Caco-2 (cell line): ENCODE measurements at regions of chr1 and their contacts with region 1.

Region 1: DNA sequence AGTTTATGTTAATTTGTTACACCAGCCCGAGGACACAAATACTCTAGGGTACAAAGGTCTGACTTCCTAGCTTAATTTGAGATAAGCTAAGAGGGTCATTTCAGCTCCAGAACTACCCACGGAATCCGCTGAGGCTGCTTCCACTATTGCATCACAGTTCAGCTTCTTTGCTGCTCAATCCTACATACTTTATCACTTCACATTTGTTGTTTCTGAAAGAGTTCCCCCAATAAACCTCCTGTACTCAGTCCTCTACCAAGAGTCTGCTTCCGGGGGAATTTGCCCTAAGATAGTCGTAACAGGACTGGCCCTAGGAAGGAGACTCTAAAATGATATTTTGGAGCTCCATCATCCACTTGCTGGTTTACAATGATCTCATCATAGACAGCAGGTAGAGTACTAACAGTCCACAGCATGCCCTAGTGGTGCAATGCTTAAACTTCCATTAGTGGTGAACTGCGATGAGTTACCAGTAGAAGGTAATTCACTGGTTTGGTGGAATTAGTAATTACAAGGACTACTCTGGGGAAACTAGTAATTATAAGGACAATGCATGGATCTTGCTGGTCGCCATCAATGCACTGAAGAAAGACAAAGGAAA is 229.3 kb downstream of the USH2A start:
- DNase-seq: peak; percentile 22 to 32
- H3K4me3 ChIP-seq: no peak overlapping the region
- H3K4me3 Mint-ChIP-seq: peak overlapping the region; percentile 27
- H3K27ac Mint-ChIP-seq: no peak overlapping the region
- H3K4me1 ChIP-seq: peaks cover 11% of the 10 kb centered on the region; the same call in 1 of the 2 replicates
- H3K4me1 Mint-ChIP-seq: peaks cover 7% of the 10 kb centered on the region
- H3K27me3 ChIP-seq: no peaks in the 10 kb centered on the region
- H3K27me3 Mint-ChIP-seq: no peaks in the 10 kb centered on the region
- CTCF ChIP-seq: peak; percentile 40 to 41

Region 2: DNA sequence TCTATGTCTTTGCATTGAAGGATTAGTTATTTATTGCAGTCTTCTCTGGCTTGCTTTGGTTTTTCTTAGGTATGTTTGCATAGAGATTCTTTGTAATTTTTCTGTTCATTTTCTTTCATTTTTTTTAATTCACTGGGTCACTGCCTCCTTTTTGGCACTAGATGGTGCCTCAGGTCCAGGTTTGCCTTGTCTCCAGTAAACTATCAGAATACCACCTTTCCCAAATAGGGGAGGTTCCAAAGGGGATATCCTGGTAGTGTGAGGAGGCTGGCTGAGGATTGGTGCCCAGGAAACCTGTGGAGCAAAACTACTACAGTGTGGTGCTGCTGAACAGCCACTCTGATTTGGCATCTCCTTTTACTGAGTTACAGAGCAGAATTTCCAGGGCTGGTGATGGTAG is 369.7 kb before region 1 on chr1:
- CTCF ChIA-PET with region 1: no interaction called
- POLR2A ChIA-PET with region 1: no interaction called
- intact Hi-C with region 1: loop called (anchors 10 kb)
- DNase-seq: peak in 1 of 2 experiments; percentile 24
- H3K4me3 ChIP-seq: no peak overlapping the region
- H3K4me3 Mint-ChIP-seq: no peak overlapping the region
- H3K27ac Mint-ChIP-seq: no peak overlapping the region
- H3K4me1 ChIP-seq: no peaks in the 10 kb centered on the region
- H3K4me1 Mint-ChIP-seq: no peaks in the 10 kb centered on the region
- H3K27me3 ChIP-seq: no peaks in the 10 kb centered on the region
- H3K27me3 Mint-ChIP-seq: no peaks in the 10 kb centered on the region
- CTCF ChIP-seq: peak; percentile 32 to 73

Region 3: DNA sequence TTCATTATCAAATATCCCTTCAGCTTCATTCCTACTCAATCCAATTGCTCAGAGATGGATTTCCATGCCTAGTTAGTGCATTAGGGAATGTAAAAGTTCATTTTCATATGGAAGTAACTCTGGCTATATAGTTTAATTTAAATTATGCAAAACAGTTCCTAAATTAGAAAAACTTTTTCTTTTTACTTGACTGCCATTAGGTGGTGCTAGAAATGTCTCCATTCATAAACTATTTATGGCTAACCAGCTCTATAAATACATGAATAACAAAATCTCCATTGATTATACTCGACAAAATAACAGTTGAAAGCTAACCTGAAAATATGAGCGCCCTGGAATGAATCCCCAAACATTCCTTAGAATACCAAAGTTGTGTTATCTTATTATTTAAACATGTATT is 82.1 kb before region 1 on chr1:
- CTCF ChIA-PET with region 1: interaction called, 8 read pairs
- POLR2A ChIA-PET with region 1: no interaction called
- intact Hi-C with region 1: loop called (anchors 1 kb)
- DNase-seq: no peak
- H3K4me3 ChIP-seq: no peak overlapping the region
- H3K4me3 Mint-ChIP-seq: no peak overlapping the region
- H3K27ac Mint-ChIP-seq: no peak overlapping the region
- H3K4me1 ChIP-seq: no peaks in the 10 kb centered on the region
- H3K4me1 Mint-ChIP-seq: no peaks in the 10 kb centered on the region
- H3K27me3 ChIP-seq: no peaks in the 10 kb centered on the region
- H3K27me3 Mint-ChIP-seq: no peaks in the 10 kb centered on the region
- CTCF ChIP-seq: peak; percentile 6 to 17

Region 4: DNA sequence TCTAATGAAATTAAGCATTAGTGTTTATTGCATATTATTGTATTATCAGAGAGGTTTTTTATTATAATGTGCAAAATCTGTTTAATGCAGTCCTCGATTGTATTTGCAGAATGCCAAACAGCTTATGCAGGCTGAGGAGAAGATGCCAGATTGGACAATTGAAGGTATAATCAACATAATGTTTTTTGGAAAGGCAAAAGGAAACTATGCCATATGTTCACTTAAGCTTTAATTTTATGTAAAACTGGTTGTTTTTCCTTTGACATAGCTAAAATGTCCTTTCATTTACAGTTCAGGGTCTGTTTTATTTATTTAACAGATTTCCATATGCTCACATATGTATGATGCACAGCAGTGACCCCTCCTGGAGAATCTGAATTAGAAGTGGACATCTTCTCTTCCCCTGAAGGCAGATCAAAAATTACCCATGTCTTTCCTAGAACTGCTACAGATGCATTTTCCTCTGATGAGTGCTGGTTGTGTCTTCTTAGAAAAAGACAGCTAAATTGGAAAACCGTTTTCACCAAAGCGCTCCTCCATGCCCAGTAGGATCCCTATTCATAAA is 372.8 kb after region 1 on chr1:
- CTCF ChIA-PET with region 1: no interaction called
- POLR2A ChIA-PET with region 1: no interaction called
- intact Hi-C with region 1: loop called (anchors 10 kb)
- DNase-seq: peak in 1 of 2 experiments; percentile 14
- H3K4me3 ChIP-seq: no peak overlapping the region
- H3K4me3 Mint-ChIP-seq: no peak overlapping the region
- H3K27ac Mint-ChIP-seq: no peak overlapping the region
- H3K4me1 ChIP-seq: no peaks in the 10 kb centered on the region
- H3K4me1 Mint-ChIP-seq: no peaks in the 10 kb centered on the region
- H3K27me3 ChIP-seq: no peaks in the 10 kb centered on the region
- H3K27me3 Mint-ChIP-seq: no peaks in the 10 kb centered on the region
- CTCF ChIP-seq: peak; percentile 39 to 42